ENCODE measurements at regions of chr17 and their contacts with region 1.

Region 1: GRCh38 chr17:40399185-40399584 is 18.5 kb downstream of the TOP2A start:
- DNase-seq: no peak
- H3K4me3 ChIP-seq: no peak overlapping the region
- H3K27ac ChIP-seq: no peak overlapping the region
- H3K4me1 ChIP-seq: no peaks in the 10 kb centered on the region
- H3K27me3 ChIP-seq: no peaks in the 10 kb centered on the region
- CTCF ChIP-seq: peak in 2 of 3 experiments; percentile 28 to 39; a peak in 3 of 4 replicates
- EP300 ChIP-seq: no peak
- POLR2A ChIP-seq: no peak
- RAD21 ChIP-seq: peak; percentile 41 to 54; a peak in 3 of 4 replicates

Region 2: GRCh38 chr17:40387680-40388079 is 11.5 kb before region 1 on chr17:
- CTCF ChIA-PET with region 1: interaction called, 11 read pairs
- POLR2A ChIA-PET with region 1: interaction called, 10 read pairs
- DNase-seq: no peak
- H3K4me3 ChIP-seq: no peak overlapping the region
- H3K27ac ChIP-seq: no peak overlapping the region
- H3K4me1 ChIP-seq: no peaks in the 10 kb centered on the region
- H3K27me3 ChIP-seq: no peaks in the 10 kb centered on the region
- CTCF ChIP-seq: no peak
- EP300 ChIP-seq: no peak
- POLR2A ChIP-seq: no peak
- RAD21 ChIP-seq: no peak

Region 3: DNA sequence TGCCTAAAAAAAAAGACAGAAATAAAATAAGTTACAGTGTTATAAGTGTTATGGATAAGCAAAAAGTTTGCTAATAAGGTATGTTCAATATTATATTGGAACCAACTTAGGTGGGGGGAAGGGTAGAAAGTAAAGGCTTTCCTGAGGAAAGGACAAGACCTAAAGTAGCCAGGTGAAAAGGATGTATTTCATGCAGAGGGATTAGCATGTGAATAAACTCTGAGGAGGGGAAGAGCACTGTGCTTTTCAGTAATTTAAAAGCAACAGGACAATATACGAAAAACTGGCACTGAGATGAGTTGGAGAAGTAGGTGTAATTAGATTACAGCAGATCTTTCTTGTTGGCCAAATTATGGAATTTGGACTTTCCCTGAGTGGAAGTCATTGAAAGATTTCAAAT is 10.9 kb after region 1 on chr17:
- CTCF ChIA-PET with region 1: interaction called, 26 read pairs
- POLR2A ChIA-PET with region 1: interaction called, 32 read pairs
- DNase-seq: no peak
- H3K4me3 ChIP-seq: peak overlapping the region in 1 of 4 experiments; percentile 38; a peak in 2 of 8 replicates
- H3K27ac ChIP-seq: peak overlapping the region; percentile 33; the same call in 1 of the 2 replicates
- H3K4me1 ChIP-seq: peaks cover 0 to 12% (median 1%) of the 10 kb centered on the region in 4 experiments; a peak in 3 of 7 replicates
- H3K27me3 ChIP-seq: no peaks in the 10 kb centered on the region
- CTCF ChIP-seq: no peak
- EP300 ChIP-seq: no peak
- POLR2A ChIP-seq: no peak
- RAD21 ChIP-seq: no peak

Region 4: GRCh38 chr17:40417609-40418427 is 18.6 kb after region 1 on chr17 and contains the start of gene TOP2A:
- CTCF ChIA-PET with region 1: interaction called, 26 read pairs
- POLR2A ChIA-PET with region 1: interaction called, 32 read pairs
- DNase-seq: peak; percentile 98 to 99
- H3K4me3 ChIP-seq: peak within 1 kb of the TSS; percentile 81 to 97 (median 95)
- H3K27ac ChIP-seq: peak within 1 kb of the TSS; percentile 55; the same call in 1 of the 2 replicates
- H3K4me1 ChIP-seq: peaks cover 2 to 10% (median 6%) of the 10 kb centered on the region in 4 experiments
- H3K27me3 ChIP-seq: no peaks in the 10 kb centered on the region
- CTCF ChIP-seq: no peak
- EP300 ChIP-seq: no peak
- POLR2A ChIP-seq: 0 out of 3 replicates have a peak, but pooled peaks of 1 of the 2 experiments have one; percentile 53
- RAD21 ChIP-seq: no peak
- total RNA-seq, gene TOP2A: 276 and 291 TPM in 2 replicates

Measured in H1 (cell line).